ENCODE measurements at regions of chrX and their contacts with region 1.

Region 1: GRCh38 chrX:48475774-48476577 is at the start of gene FTSJ1:
- DNase-seq: peak; percentile 78
- ATAC-seq: peak; percentile 86
- H3K4me3 ChIP-seq: peak within 1 kb of the TSS; percentile 79 to 86
- H3K27ac ChIP-seq: peak within 1 kb of the TSS; percentile 71
- H3K4me1 ChIP-seq: peaks cover 5 to 22% of the 10 kb centered on the region in 2 experiments; a peak in 3 of 4 replicates
- H3K27me3 ChIP-seq: no peaks in the 10 kb centered on the region
- CTCF ChIP-seq: no peak
- POLR2A ChIP-seq: peak; percentile 45
- RAD21 ChIP-seq: no peak
- total RNA-seq, gene FTSJ1: 64.9 TPM

Region 2: GRCh38 chrX:48508400-48509244 is 32.6 kb after region 1 on chrX and contains the start of gene PORCN:
- CTCF ChIA-PET with region 1: no interaction called
- POLR2A ChIA-PET with region 1: no interaction called
- RAD21 ChIA-PET with region 1: no interaction called
- intact Hi-C with region 1: loop called (anchors 2 kb)
- DNase-seq: no peak
- ATAC-seq: peak; percentile 91
- H3K4me3 ChIP-seq: peak within 1 kb of the TSS; percentile 51 to 68
- H3K27ac ChIP-seq: peak within 1 kb of the TSS; percentile 78
- H3K4me1 ChIP-seq: peaks cover 6 to 18% of the 10 kb centered on the region in 2 experiments; a peak in 3 of 4 replicates
- H3K27me3 ChIP-seq: no peaks in the 10 kb centered on the region
- CTCF ChIP-seq: no peak
- POLR2A ChIP-seq: no peak
- RAD21 ChIP-seq: no peak
- total RNA-seq, gene PORCN: 12.9 TPM

Region 3: DNA sequence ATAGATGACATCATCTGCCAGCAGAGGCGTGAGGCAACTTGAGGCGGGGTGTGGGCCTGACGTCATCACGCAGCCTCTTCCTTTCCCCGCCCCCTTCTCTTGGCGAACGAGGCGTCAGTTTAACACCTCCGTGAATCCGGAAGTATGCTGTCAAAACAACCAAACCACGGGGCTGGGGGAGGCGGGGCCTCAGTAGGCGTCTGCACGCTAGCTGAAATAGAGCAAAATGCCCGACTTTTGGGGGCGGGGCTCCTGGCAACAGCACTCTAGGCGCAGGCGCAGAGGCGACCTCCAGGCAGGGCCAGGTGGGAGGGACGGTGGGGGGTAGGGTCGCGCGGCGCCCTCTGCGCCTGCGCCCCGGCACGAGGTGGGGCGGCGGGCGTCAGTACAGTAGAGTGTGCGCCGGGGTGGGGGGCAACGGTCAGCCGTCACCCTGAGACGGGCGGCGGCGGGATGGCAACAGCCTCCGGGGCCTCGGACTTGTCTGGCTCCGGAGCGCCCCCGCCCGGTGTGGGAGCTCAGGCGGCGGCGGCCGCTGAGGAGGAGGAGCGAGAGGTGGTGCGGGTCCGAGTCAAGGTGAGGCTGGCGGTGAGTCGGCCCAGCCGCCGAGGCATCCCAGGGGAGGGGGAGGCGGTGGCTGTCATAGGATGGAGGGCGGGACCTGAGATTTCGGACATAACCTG is 63.5 kb after region 1 on chrX and contains the start of gene TBC1D25:
- CTCF ChIA-PET with region 1: interaction called, 7 read pairs
- POLR2A ChIA-PET with region 1: no interaction called
- RAD21 ChIA-PET with region 1: no interaction called
- intact Hi-C with region 1: loop called (anchors 2 kb)
- DNase-seq: peak; percentile 96
- ATAC-seq: peak; percentile 86
- H3K4me3 ChIP-seq: peak within 1 kb of the TSS; percentile 56 to 63
- H3K27ac ChIP-seq: peak within 1 kb of the TSS; percentile 67
- H3K4me1 ChIP-seq: peaks cover 0 to 15% of the 10 kb centered on the region in 2 experiments; a peak in 3 of 4 replicates
- H3K27me3 ChIP-seq: no peaks in the 10 kb centered on the region
- CTCF ChIP-seq: peak in 2 of 3 experiments; percentile 40 to 42; a peak in 4 of 6 replicates
- POLR2A ChIP-seq: no peak
- RAD21 ChIP-seq: no peak
- total RNA-seq, gene TBC1D25: 10.5 TPM

Region 4: GRCh38 chrX:48574270-48575266 is 98.6 kb after region 1 on chrX and contains the start of gene RBM3:
- CTCF ChIA-PET with region 1: no interaction called
- POLR2A ChIA-PET with region 1: no interaction called
- RAD21 ChIA-PET with region 1: no interaction called
- intact Hi-C with region 1: loop called (anchors 10 kb)
- DNase-seq: peak; percentile 77
- ATAC-seq: peak; percentile 96
- H3K4me3 ChIP-seq: peak within 1 kb of the TSS; percentile 84 to 90
- H3K27ac ChIP-seq: peak within 1 kb of the TSS; percentile 95
- H3K4me1 ChIP-seq: peaks cover 5 to 14% of the 10 kb centered on the region in 2 experiments
- H3K27me3 ChIP-seq: no peaks in the 10 kb centered on the region
- CTCF ChIP-seq: peak in 2 of 3 experiments; percentile 23 to 26; a peak in 2 of 6 replicates
- POLR2A ChIP-seq: peak; percentile 34
- RAD21 ChIP-seq: no peak
- total RNA-seq, gene RBM3: 233 TPM